OCI-LY7 (cell line): ENCODE measurements at regions of chr4 and their contacts with region 1.

Region 1: GRCh38 chr4:83440899-83441298 is 14.7 kb downstream of the HELQ start:
- DNase-seq: no peak
- H3K4me3 ChIP-seq: peak overlapping the region; percentile 29
- H3K27ac ChIP-seq: peak overlapping the region; percentile 94
- H3K4me1 ChIP-seq: peaks cover 55% of the 10 kb centered on the region
- CTCF ChIP-seq: no peak

Region 2: GRCh38 chr4:82890901-82891706 is 549.8 kb before region 1 on chr4 and contains the start of gene SEC31A:
- CTCF ChIA-PET with region 1: no interaction called
- POLR2A ChIA-PET with region 1: no interaction called
- intact Hi-C with region 1: loop called (anchors 5 kb)
- DNase-seq: peak; percentile 97
- H3K4me3 ChIP-seq: peak within 1 kb of the TSS; percentile 80
- H3K27ac ChIP-seq: peak within 1 kb of the TSS; percentile 84
- H3K4me1 ChIP-seq: peaks cover 53% of the 10 kb centered on the region
- CTCF ChIP-seq: peak; percentile 44
- total RNA-seq, gene SEC31A: 80.0 and 93.4 TPM in 2 replicates

Region 3: DNA sequence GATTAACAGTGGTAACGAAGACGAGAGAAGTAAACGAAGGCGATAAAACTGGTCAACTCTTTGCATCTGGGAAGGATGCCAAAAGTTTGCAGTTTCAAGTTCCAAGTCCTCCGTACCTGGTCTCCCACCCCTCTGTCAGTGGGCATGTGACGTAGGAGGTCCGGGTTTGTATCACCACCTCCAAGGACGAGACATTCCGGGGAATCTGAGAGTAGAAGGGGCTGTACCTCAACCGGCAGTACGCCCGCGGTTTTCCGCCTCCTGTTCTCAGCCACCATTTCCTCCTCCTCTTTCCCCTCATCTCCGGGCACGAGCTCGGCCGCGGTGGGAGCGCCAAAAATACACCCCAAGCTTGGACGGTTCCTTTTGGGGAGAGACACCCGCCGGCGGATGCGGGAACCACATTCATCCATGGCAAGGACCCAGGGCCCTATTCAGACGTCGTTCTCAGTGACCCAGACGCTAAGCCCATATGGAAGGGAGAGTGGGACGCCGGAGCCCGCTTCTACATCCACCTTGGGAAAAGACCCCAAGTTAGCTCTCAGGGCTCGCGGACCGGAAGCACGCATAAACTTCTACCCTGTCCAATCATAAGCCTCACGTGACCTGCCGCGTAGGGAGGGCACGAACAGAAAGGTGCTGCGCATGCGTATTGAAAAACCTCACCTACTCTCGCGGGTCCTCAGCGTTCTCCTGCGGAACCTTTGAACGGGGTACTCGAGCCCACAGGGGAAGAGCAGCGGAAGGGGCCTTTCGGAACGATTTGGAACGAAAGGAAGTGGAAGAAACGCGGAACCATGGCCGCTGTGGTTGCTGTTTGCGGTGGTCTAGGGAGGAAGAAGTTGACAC is 14.6 kb after region 1 on chr4 and contains the starts of genes HELQ and MRPS18C:
- CTCF ChIA-PET with region 1: interaction called, 3 read pairs
- POLR2A ChIA-PET with region 1: interaction called, 66 read pairs
- intact Hi-C with region 1: loop called (anchors 2 kb)
- DNase-seq: peak; percentile 100
- H3K4me3 ChIP-seq: peak within 1 kb of the TSS; percentile 89
- H3K27ac ChIP-seq: peak within 1 kb of the TSS; percentile 62
- H3K4me1 ChIP-seq: peaks cover 37% of the 10 kb centered on the region
- CTCF ChIP-seq: peak; percentile 58
- total RNA-seq, gene HELQ: 63.3 and 67.1 TPM in 2 replicates
- total RNA-seq, gene MRPS18C: 38.1 and 41.4 TPM in 2 replicates